Activated CD8-positive, alpha-beta T cell treated with anti-CD3 and anti-CD28 coated beads, Interleukin-2, amount 10 ng/mL, durations not matched to agents 7 days and 5 days (primary cell): ENCODE measurements at regions of chr2 and their contacts with region 1.

Region 1: GRCh38 chr2:85302121-85302520 is 25.7 kb downstream of the TGOLN2 start:
- DNase-seq: no peak
- ATAC-seq: no peak
- H3K4me3 Mint-ChIP-seq: no peak overlapping the region
- H3K27ac Mint-ChIP-seq: no peak overlapping the region
- H3K4me1 Mint-ChIP-seq: peaks cover 7% of the 10 kb centered on the region
- H3K27me3 Mint-ChIP-seq: peaks cover 15% of the 10 kb centered on the region

Region 2: DNA sequence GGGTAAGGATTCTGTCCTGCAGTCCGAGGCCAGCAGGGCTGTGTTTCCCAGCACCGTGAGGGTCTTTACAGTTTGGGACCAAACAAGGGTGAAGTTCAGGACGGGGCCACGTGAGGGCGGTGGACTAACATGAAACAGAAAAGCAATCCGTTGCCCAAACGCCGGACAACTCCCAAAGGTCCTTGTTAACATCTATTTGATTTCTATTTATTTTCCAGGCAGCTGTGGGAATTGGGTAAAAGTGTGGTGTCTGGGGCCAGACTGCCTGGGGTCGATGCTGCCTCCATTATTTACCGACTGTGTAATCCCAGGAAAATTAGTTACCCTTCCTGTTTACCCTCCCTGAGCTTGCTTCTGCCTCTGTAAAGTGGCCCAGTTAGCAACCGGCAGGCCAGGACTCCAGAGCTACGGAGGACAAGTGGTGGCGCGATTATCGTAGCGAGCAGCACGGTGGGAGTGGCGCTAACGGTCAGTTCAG is 235.2 kb before region 1 on chr2:
- CTCF ChIA-PET with region 1: interaction called, 30 read pairs
- POLR2A ChIA-PET with region 1: no interaction called
- DNase-seq: peak; percentile 63
- ATAC-seq: peak; percentile 53
- H3K4me3 Mint-ChIP-seq: no peak overlapping the region
- H3K27ac Mint-ChIP-seq: no peak overlapping the region
- H3K4me1 Mint-ChIP-seq: no peaks in the 10 kb centered on the region
- H3K27me3 Mint-ChIP-seq: peaks cover 25% of the 10 kb centered on the region

Region 3: GRCh38 chr2:85273738-85274731 is 28.1 kb before region 1 on chr2:
- CTCF ChIA-PET with region 1: interaction called, 24 read pairs
- POLR2A ChIA-PET with region 1: no interaction called
- DNase-seq: no peak
- ATAC-seq: no peak
- H3K4me3 Mint-ChIP-seq: no peak overlapping the region
- H3K27ac Mint-ChIP-seq: no peak overlapping the region
- H3K4me1 Mint-ChIP-seq: no peaks in the 10 kb centered on the region
- H3K27me3 Mint-ChIP-seq: peaks cover 12% of the 10 kb centered on the region

Region 4: GRCh38 chr2:85288244-85288725 is 13.8 kb before region 1 on chr2:
- CTCF ChIA-PET with region 1: interaction called, 83 read pairs
- POLR2A ChIA-PET with region 1: interaction called, 3 read pairs
- DNase-seq: no peak
- ATAC-seq: no peak
- H3K4me3 Mint-ChIP-seq: no peak overlapping the region
- H3K27ac Mint-ChIP-seq: no peak overlapping the region
- H3K4me1 Mint-ChIP-seq: peaks cover 21% of the 10 kb centered on the region
- H3K27me3 Mint-ChIP-seq: no peaks in the 10 kb centered on the region

Region 5: GRCh38 chr2:85318222-85319074 is 16.3 kb after region 1 on chr2:
- CTCF ChIA-PET with region 1: interaction called, 20 read pairs
- POLR2A ChIA-PET with region 1: no interaction called
- DNase-seq: no peak
- ATAC-seq: peak; percentile 66
- H3K4me3 Mint-ChIP-seq: peak overlapping the region; percentile 57
- H3K27ac Mint-ChIP-seq: peak overlapping the region; percentile 76
- H3K4me1 Mint-ChIP-seq: peaks cover 62% of the 10 kb centered on the region
- H3K27me3 Mint-ChIP-seq: no peaks in the 10 kb centered on the region

Region 6: GRCh38 chr2:85401850-85402243 is 99.7 kb after region 1 on chr2:
- CTCF ChIA-PET with region 1: no interaction called
- POLR2A ChIA-PET with region 1: no interaction called
- DNase-seq: no peak
- ATAC-seq: no peak
- H3K4me3 Mint-ChIP-seq: no peak overlapping the region
- H3K27ac Mint-ChIP-seq: no peak overlapping the region
- H3K4me1 Mint-ChIP-seq: peaks cover 29% of the 10 kb centered on the region
- H3K27me3 Mint-ChIP-seq: no peaks in the 10 kb centered on the region